CD4-positive, alpha-beta memory T cell (primary cell): ENCODE measurements at regions of chr20 and their contacts with region 1.

Region 1: GRCh38 chr20:48760403-48760983 is 67.3 kb downstream of the PREX1 start:
- DNase-seq: peak; percentile 82 to 92 (median 84)
- H3K4me3 ChIP-seq: peak overlapping the region; percentile 20 to 54
- H3K4me3 Mint-ChIP-seq: peak overlapping the region; percentile 70 to 89 (median 85)
- H3K27ac ChIP-seq: peak overlapping the region; percentile 86
- H3K27ac Mint-ChIP-seq: peak overlapping the region; percentile 87 to 99 (median 98)
- H3K4me1 ChIP-seq: peaks cover 87% of the 10 kb centered on the region
- H3K4me1 Mint-ChIP-seq: peaks cover 64 to 97% (median 82%) of the 10 kb centered on the region in 4 donors
- H3K27me3 ChIP-seq: no peaks in the 10 kb centered on the region
- H3K27me3 Mint-ChIP-seq: no peaks in the 10 kb centered on the region

Region 2: GRCh38 chr20:48523212-48523941 is 237.1 kb before region 1 on chr20:
- CTCF ChIA-PET with region 1: no interaction called
- POLR2A ChIA-PET with region 1: no interaction called
- intact Hi-C with region 1: no loop called
- DNase-seq: no peak
- H3K4me3 ChIP-seq: no peak overlapping the region
- H3K4me3 Mint-ChIP-seq: no peak overlapping the region
- H3K27ac ChIP-seq: no peak overlapping the region
- H3K27ac Mint-ChIP-seq: no peak overlapping the region
- H3K4me1 ChIP-seq: no peaks in the 10 kb centered on the region
- H3K4me1 Mint-ChIP-seq: no peaks in the 10 kb centered on the region
- H3K27me3 ChIP-seq: no peaks in the 10 kb centered on the region
- H3K27me3 Mint-ChIP-seq: peaks cover 11 to 22% of the 10 kb centered on the region in 2 donors

Region 3: GRCh38 chr20:48783533-48784272 is 23.2 kb after region 1 on chr20:
- CTCF ChIA-PET with region 1: no interaction called
- POLR2A ChIA-PET with region 1: interaction called, 3 read pairs
- intact Hi-C with region 1: loop called (anchors 1 kb)
- DNase-seq: peak; percentile 55 to 80 (median 68)
- H3K4me3 ChIP-seq: no peak overlapping the region
- H3K4me3 Mint-ChIP-seq: no peak overlapping the region
- H3K27ac ChIP-seq: peak overlapping the region; percentile 59
- H3K27ac Mint-ChIP-seq: no peak overlapping the region
- H3K4me1 ChIP-seq: peaks cover 93% of the 10 kb centered on the region
- H3K4me1 Mint-ChIP-seq: peaks cover 0 to 55% (median 33%) of the 10 kb centered on the region in 4 donors
- H3K27me3 ChIP-seq: no peaks in the 10 kb centered on the region
- H3K27me3 Mint-ChIP-seq: no peaks in the 10 kb centered on the region

Region 4: DNA sequence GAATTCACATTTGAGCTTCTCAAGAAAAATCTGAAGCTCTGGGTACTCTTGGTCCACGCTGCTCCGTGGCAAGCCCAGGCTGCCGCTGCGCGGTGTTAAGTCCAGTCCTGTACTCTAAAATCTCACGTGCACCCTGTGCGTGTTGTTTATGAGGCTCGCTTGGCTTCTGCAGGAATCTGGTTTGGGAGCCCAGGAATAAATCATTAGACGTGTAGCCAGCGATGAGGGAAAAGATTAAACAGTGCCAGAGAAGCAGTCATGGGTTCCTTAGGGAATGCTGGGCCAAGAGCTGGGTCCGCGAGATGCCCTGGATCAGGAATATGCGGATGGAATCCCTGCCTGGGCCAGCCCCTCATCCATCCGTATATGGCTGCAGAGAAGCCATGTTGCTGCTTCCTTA is 634.7 kb after region 1 on chr20:
- CTCF ChIA-PET with region 1: no interaction called
- POLR2A ChIA-PET with region 1: no interaction called
- intact Hi-C with region 1: no loop called
- DNase-seq: no peak
- H3K4me3 ChIP-seq: no peak overlapping the region
- H3K4me3 Mint-ChIP-seq: no peak overlapping the region
- H3K27ac ChIP-seq: no peak overlapping the region
- H3K27ac Mint-ChIP-seq: no peak overlapping the region
- H3K4me1 ChIP-seq: no peaks in the 10 kb centered on the region
- H3K4me1 Mint-ChIP-seq: no peaks in the 10 kb centered on the region
- H3K27me3 ChIP-seq: no peaks in the 10 kb centered on the region
- H3K27me3 Mint-ChIP-seq: peaks cover 13 to 18% of the 10 kb centered on the region in 2 donors